ENCODE measurements at regions of chr3 and their contacts with region 1.

Region 1: GRCh38 chr3:55485211-55485791 is 1.8 kb downstream of the WNT5A start:
- DNase-seq: peak; percentile 74 to 93 (median 84)
- ATAC-seq: peak; percentile 68 to 86 (median 78)
- H3K4me3 ChIP-seq: peak overlapping the region in 3 of 4 donors; percentile 66 to 78 (median 72)
- H3K27ac ChIP-seq: peak overlapping the region in 3 of 4 donors; percentile 55 to 62 (median 62)
- H3K4me1 ChIP-seq: peaks cover 0 to 7% (median 0%) of the 10 kb centered on the region in 3 donors
- H3K27me3 ChIP-seq: no peaks in the 10 kb centered on the region
- CTCF ChIP-seq: peak; percentile 73 to 82 (median 78)

Region 2: DNA sequence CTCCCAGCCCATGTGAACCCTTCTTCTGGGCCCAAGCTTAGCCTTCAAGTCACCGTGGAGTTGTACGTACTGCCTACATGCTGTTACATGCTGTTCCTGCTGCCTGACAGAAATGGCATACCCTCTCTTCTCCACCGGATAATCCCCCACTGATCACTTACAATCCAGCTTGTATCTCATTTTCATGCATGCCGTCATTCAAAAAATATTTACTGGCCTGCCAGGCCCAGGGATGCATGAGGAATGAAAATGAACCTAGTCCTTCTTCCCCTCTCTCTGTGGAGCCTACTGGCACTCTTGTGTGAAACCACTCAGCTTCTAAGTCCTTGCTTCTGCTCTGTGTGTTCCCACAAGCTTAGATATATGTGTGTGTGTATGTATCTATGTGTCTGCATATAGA is 58.8 kb before region 1 on chr3:
- intact Hi-C with region 1: no loop called
- DNase-seq: no peak
- ATAC-seq: no peak
- H3K4me3 ChIP-seq: no peak overlapping the region
- H3K27ac ChIP-seq: no peak overlapping the region
- H3K4me1 ChIP-seq: no peaks in the 10 kb centered on the region
- H3K27me3 ChIP-seq: no peaks in the 10 kb centered on the region
- CTCF ChIP-seq: no peak

Region 3: DNA sequence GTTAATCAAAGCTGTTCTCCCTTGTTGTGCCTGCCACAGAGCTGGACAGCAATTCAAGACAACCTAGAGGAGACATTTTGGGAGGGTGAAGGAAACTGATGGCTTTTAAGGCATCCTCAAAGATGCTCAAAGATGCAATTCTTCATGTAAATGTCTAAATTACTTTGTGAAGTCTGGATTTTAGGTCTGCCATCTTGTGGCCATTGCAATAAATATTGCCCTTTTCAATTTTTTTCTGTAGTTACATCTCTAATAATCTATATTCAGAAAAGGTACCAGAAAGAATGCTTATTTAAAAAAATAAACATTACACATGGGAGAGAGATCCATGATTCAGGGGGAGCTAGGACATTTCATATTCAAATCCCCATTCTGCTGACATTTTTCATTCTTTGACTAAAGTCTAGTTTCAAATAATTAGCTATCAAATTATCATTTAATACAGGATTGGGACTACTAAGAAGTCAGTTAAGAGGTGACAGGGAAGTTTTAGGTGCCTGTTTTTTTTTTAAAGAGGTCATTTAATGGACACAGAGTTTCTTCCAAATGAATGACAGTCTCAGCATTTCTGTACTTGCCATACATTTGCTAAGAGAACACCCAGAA is 261.6 kb after region 1 on chr3:
- intact Hi-C with region 1: loop called in 1 of 3 experiments (anchors 10 kb)
- DNase-seq: no peak
- ATAC-seq: no peak
- H3K4me3 ChIP-seq: no peak overlapping the region
- H3K27ac ChIP-seq: no peak overlapping the region
- H3K4me1 ChIP-seq: peaks cover 0 to 4% (median 0%) of the 10 kb centered on the region in 3 donors
- H3K27me3 ChIP-seq: no peaks in the 10 kb centered on the region
- CTCF ChIP-seq: peak in 2 of 4 donors; percentile 9 to 31

Region 4: DNA sequence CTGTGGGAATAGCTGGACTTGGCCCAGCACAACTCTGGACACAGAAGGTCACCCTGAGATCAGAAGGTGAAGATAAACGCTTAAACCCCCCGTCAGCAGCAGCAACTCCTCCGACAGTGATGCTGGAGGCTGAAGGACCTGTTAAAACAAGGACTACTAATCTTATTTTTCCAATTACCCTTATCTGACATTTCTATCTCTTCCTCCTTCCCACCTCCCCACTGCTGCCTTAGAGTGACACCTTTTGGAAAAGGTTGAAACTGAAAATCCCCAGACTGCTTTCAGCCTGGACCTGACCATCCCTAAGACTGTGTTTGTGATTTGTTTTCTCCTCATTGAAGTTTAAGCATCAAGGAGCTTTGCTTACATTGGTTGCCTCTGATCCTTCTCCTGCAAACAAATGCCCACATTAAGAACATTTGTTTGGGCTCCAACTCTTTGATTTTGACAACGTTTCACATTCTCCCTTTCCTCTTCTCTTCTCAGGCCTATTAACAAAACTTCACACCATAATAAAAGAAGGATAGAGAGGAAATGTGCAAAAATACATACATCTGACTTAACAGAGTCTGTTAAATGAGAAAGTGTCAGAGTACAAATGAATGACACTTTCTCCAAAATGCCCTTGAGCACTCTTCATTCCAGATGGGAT is 412.4 kb after region 1 on chr3:
- intact Hi-C with region 1: loop called in 1 of 3 experiments (anchors 10 kb)
- DNase-seq: peak in 1 of 6 donors; percentile 13
- ATAC-seq: peak; percentile 45 to 79 (median 71)
- H3K4me3 ChIP-seq: no peak overlapping the region
- H3K27ac ChIP-seq: no peak overlapping the region
- H3K4me1 ChIP-seq: no peaks in the 10 kb centered on the region
- H3K27me3 ChIP-seq: no peaks in the 10 kb centered on the region
- CTCF ChIP-seq: no peak